GM12878 (cell line): ENCODE measurements at regions of chr20 and their contacts with region 1.

Region 1: DNA sequence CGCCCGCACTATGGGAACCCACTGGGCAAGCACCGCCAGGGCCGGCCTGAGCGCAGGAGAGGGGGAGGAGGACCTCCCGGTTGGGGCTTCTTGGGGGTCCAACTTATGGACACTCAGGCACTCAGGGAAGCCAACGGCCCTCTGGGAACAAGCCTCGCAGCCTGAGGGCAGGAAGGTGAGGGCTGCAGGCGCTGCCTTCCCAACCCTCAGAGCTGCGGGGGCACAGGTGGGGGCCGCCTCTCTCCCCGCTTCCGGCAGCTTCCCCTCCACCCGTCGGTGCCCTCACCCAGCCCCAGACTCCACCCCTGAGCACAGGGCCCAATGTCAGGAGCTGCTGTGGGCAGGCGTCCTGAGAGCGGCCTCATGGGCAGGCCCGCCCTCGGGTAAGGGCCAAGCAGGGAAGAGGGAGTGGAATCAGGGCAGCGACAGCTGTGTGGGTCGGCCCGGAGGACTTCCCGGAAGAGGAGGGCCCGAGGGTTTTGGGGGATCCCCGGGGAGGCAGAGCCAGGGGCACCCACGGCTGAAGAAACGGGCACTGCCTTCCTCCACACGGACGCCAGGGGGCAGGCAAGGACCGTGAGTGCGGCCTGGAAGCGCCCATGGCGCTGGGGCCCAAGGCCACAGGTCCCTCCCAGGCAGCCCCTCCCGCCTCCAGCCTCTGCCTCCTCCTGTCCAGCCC is 488 bp upstream of the PTK6 start:
- DNase-seq: peak; percentile 93
- ATAC-seq: peak; percentile 97
- H3K4me3 ChIP-seq: peak overlapping the region; percentile 63
- H3K27ac ChIP-seq: peak overlapping the region; percentile 82
- H3K4me1 ChIP-seq: peaks cover 20% of the 10 kb centered on the region
- H3K27me3 ChIP-seq: no peaks in the 10 kb centered on the region
- CTCF ChIP-seq: peak; percentile 94 to 100 (median 97); a peak in 5 of 6 replicates
- EP300 ChIP-seq: peak in 1 of 2 experiments; percentile 10; a peak in 1 of 4 replicates
- POLR2A ChIP-seq: peak; percentile 84
- RAD21 ChIP-seq: peak; percentile 89

Region 2: GRCh38 chr20:63495741-63496595 is 41.7 kb before region 1 on chr20:
- CTCF ChIA-PET with region 1: interaction called, 19 read pairs
- POLR2A ChIA-PET with region 1: no interaction called
- RAD21 ChIA-PET with region 1: interaction called, 12 read pairs
- SMC1A ChIA-PET with region 1: interaction called, 12 read pairs
- in situ Hi-C with region 1: no loop called
- intact Hi-C with region 1: no loop called
- DNase-seq: no peak
- ATAC-seq: peak; percentile 91
- H3K4me3 ChIP-seq: no peak overlapping the region
- H3K27ac ChIP-seq: no peak overlapping the region
- H3K4me1 ChIP-seq: no peaks in the 10 kb centered on the region
- H3K27me3 ChIP-seq: peaks cover 1 to 4% of the 10 kb centered on the region in 2 experiments; a peak in 3 of 4 replicates
- CTCF ChIP-seq: peak; percentile 80 to 92 (median 86)
- EP300 ChIP-seq: no peak
- POLR2A ChIP-seq: no peak
- RAD21 ChIP-seq: peak; percentile 63

Region 3: DNA sequence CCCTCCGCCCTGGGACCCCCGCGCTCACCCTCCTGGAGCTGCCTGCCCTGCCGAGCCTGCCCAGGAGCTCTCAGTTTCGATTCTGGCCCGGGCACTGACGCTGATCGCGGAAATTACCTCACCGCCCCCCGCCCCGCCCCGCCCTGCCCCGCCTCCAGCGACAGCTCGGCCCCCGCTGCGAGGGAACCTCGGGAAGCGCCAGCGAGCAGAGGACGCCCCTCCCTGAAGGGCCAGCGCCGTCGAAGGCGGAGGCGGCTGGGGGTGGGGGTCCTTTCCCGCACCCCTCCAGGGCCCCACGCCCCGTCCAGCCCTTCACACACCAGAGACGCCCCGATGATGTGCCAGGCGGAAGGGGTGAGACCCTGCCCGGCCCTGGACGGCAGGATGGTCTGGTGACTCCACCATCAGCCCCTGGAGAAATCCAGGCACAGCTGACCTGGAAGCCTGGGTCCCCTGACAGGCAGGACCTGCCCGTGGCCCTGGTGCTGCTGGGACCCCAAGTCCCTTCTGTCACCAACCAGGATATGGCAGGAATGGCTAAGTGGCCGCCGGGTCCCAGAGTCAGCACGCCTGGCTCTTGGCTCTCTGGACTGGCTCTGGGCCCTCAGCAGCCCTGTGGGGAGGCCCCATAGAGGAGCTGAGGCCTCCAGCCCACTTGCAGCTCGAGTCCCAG is 36.6 kb after region 1 on chr20 and contains the start of gene HELZ2:
- CTCF ChIA-PET with region 1: interaction called, 25 read pairs
- POLR2A ChIA-PET with region 1: interaction called, 6 read pairs
- RAD21 ChIA-PET with region 1: interaction called, 30 read pairs
- SMC1A ChIA-PET with region 1: interaction called, 11 read pairs
- in situ Hi-C with region 1: no loop called
- intact Hi-C with region 1: loop called (anchors 2 kb)
- DNase-seq: no peak
- ATAC-seq: peak; percentile 93
- H3K4me3 ChIP-seq: peak within 1 kb of the TSS; percentile 90
- H3K27ac ChIP-seq: no peak within 1 kb of the TSS; the same call in 1 of the 2 replicates
- H3K4me1 ChIP-seq: peaks cover 10% of the 10 kb centered on the region
- H3K27me3 ChIP-seq: no peaks in the 10 kb centered on the region
- CTCF ChIP-seq: no peak
- EP300 ChIP-seq: no peak
- POLR2A ChIP-seq: peak; percentile 65
- RAD21 ChIP-seq: no peak
- polyA plus RNA-seq, gene HELZ2: 0.05 to 0.08 TPM

Region 4: GRCh38 chr20:63641792-63642544 is 104.3 kb after region 1 on chr20:
- CTCF ChIA-PET with region 1: interaction called, 13 read pairs
- POLR2A ChIA-PET with region 1: interaction called, 3 read pairs
- RAD21 ChIA-PET with region 1: interaction called, 41 read pairs
- SMC1A ChIA-PET with region 1: interaction called, 13 read pairs
- in situ Hi-C with region 1: no loop called
- intact Hi-C with region 1: no loop called
- DNase-seq: peak; percentile 48
- ATAC-seq: peak; percentile 78
- H3K4me3 ChIP-seq: peak overlapping the region; percentile 92
- H3K27ac ChIP-seq: peak overlapping the region; percentile 74
- H3K4me1 ChIP-seq: peaks cover 17% of the 10 kb centered on the region
- H3K27me3 ChIP-seq: no peaks in the 10 kb centered on the region; a peak in 1 of 4 replicates
- CTCF ChIP-seq: peak; percentile 38 to 51 (median 41); a peak in 5 of 6 replicates
- EP300 ChIP-seq: no peak
- POLR2A ChIP-seq: no peak
- RAD21 ChIP-seq: peak; percentile 44

Region 5: GRCh38 chr20:63785691-63786131 is 248.0 kb after region 1 on chr20:
- CTCF ChIA-PET with region 1: interaction called, 8 read pairs
- POLR2A ChIA-PET with region 1: no interaction called
- RAD21 ChIA-PET with region 1: interaction called, 13 read pairs
- SMC1A ChIA-PET with region 1: no interaction called
- in situ Hi-C with region 1: no loop called
- intact Hi-C with region 1: no loop called
- DNase-seq: no peak
- ATAC-seq: no peak
- H3K4me3 ChIP-seq: no peak overlapping the region
- H3K27ac ChIP-seq: no peak overlapping the region
- H3K4me1 ChIP-seq: peaks cover 8% of the 10 kb centered on the region
- H3K27me3 ChIP-seq: no peaks in the 10 kb centered on the region
- CTCF ChIP-seq: no peak
- EP300 ChIP-seq: no peak
- POLR2A ChIP-seq: no peak
- RAD21 ChIP-seq: no peak

Region 6: DNA sequence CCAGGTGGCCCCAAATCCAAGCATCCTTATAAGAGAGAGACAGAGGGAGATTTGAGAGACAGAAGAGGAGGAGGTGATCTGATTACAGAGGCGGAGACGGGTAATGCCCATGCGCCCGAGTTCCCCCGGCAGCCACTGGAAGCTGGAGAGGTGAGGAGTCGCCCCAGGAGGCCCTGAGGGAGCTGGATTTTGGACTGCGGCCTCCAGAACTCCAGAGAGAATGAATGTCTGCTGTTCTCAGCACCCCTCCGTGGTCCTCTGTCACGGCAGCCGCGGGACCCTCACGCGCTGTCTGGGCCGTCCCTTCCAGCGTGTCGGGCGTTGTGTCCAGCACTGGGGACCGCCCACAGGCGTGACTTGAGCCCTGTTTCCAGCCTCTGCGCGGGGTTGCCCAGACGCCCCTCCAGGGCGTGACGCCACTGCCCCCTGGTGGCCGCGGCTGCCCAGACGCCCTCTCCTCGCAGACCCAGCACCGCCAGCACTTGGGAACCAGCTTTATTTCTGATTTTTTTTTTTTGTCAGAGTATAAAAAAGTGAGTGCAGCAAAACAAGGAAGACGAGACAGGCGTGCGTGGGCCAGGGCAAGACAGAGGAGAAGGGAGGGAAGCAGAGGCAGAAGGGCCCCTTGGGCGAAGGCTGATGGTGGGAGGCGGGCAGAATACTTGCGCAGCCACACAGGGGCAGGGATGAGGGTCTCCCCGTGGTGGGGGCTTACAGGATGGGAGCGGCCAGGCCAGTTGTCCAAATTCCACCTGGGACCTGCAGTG is 436.2 kb after region 1 on chr20:
- CTCF ChIA-PET with region 1: interaction called, 5 read pairs
- POLR2A ChIA-PET with region 1: no interaction called
- RAD21 ChIA-PET with region 1: interaction called, 8 read pairs
- SMC1A ChIA-PET with region 1: interaction called, 3 read pairs
- in situ Hi-C with region 1: no loop called
- intact Hi-C with region 1: loop called (anchors 5 kb)
- DNase-seq: no peak
- ATAC-seq: peak; percentile 76
- H3K4me3 ChIP-seq: no peak overlapping the region
- H3K27ac ChIP-seq: no peak overlapping the region; the same call in 1 of the 2 replicates
- H3K4me1 ChIP-seq: peaks cover 21% of the 10 kb centered on the region
- H3K27me3 ChIP-seq: no peaks in the 10 kb centered on the region
- CTCF ChIP-seq: peak; percentile 89 to 97 (median 95)
- EP300 ChIP-seq: no peak
- POLR2A ChIP-seq: peak; percentile 68
- RAD21 ChIP-seq: peak; percentile 77

Region 7: DNA sequence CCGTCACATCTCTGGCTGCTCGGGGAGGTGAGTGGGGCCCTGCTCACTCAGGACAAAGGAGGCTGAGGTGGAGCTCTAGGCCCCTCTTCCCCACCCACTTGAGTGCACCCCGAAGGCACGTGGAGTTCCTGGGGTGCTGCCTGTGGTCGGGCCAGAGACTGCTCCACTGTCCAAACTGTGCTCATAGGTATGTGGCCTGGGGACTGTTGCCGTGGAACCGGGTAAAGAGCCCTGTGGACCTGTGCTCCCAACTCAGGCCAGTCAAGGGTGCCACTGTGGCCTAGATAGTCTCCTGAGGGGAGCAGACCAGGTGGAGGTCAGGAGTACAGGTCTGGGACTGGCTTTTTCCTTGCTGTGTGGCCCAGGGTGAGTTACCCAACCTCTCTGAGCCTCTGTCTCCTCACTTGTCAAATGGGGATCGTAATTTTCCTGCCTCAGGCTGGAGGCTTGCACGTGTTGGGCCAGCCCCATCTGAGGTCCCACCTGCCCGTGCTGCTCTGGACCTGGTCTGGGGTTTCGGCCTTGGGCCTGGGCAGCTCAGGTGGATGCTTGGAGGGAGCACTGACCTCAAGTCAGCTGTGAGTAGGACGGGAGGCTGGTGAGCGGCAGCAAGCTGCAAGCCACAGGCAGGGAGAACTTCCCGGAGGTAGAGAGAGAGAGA is 582.1 kb after region 1 on chr20:
- CTCF ChIA-PET with region 1: interaction called, 4 read pairs
- POLR2A ChIA-PET with region 1: no interaction called
- RAD21 ChIA-PET with region 1: no interaction called
- SMC1A ChIA-PET with region 1: interaction called, 6 read pairs
- in situ Hi-C with region 1: no loop called
- intact Hi-C with region 1: loop called (anchors 5 kb)
- DNase-seq: no peak
- ATAC-seq: peak; percentile 51
- H3K4me3 ChIP-seq: no peak overlapping the region
- H3K27ac ChIP-seq: no peak overlapping the region
- H3K4me1 ChIP-seq: peaks cover 5% of the 10 kb centered on the region
- H3K27me3 ChIP-seq: no peaks in the 10 kb centered on the region; a peak in 1 of 4 replicates
- CTCF ChIP-seq: no peak
- EP300 ChIP-seq: no peak
- POLR2A ChIP-seq: no peak
- RAD21 ChIP-seq: no peak